PC-3 (cell line): ENCODE measurements at regions of chr3 and their contacts with region 1.

Region 1: GRCh38 chr3:41267975-41268663 is 68.8 kb downstream of the CTNNB1 start:
- DNase-seq: peak; percentile 99
- ATAC-seq: peak; percentile 98
- H3K4me3 ChIP-seq: no peak overlapping the region
- H3K27ac ChIP-seq: peak overlapping the region; percentile 68
- H3K4me1 ChIP-seq: peaks cover 36% of the 10 kb centered on the region
- H3K27me3 ChIP-seq: no peaks in the 10 kb centered on the region
- CTCF ChIP-seq: no peak

Region 2: GRCh38 chr3:41117398-41117870 is 150.7 kb before region 1 on chr3:
- CTCF ChIA-PET with region 1: no interaction called
- POLR2A ChIA-PET with region 1: no interaction called
- intact Hi-C with region 1: no loop called
- DNase-seq: peak; percentile 96
- ATAC-seq: peak; percentile 76
- H3K4me3 ChIP-seq: no peak overlapping the region
- H3K27ac ChIP-seq: peak overlapping the region; percentile 61
- H3K4me1 ChIP-seq: peaks cover 12% of the 10 kb centered on the region
- H3K27me3 ChIP-seq: no peaks in the 10 kb centered on the region; the same call in 1 of the 2 replicates
- CTCF ChIP-seq: no peak

Region 3: DNA sequence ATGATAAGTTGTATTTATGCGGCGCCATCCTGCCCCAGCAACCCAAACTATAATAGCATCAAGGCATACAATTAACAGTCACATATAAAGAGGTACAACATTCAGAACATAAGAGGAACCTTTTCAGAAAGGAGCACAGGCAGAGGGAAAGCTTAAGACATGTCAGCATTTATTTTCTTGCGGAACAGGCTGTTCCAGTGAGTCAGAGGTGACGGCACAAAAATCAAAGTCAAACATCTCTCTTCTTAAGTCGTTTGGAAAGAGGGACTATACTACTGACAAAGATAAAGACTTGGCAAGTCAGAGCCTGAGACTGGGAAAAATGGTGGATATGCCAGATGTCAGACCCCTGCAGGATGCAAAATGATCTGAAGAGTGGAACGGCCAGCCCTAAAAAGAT is 59.6 kb after region 1 on chr3:
- CTCF ChIA-PET with region 1: no interaction called
- POLR2A ChIA-PET with region 1: no interaction called
- intact Hi-C with region 1: loop called (anchors 5 kb)
- DNase-seq: peak; percentile 90
- ATAC-seq: peak; percentile 76
- H3K4me3 ChIP-seq: no peak overlapping the region
- H3K27ac ChIP-seq: no peak overlapping the region
- H3K4me1 ChIP-seq: peaks cover 32% of the 10 kb centered on the region
- H3K27me3 ChIP-seq: no peaks in the 10 kb centered on the region
- CTCF ChIP-seq: no peak

Region 4: GRCh38 chr3:41574900-41575299 is 306.8 kb after region 1 on chr3:
- CTCF ChIA-PET with region 1: no interaction called
- POLR2A ChIA-PET with region 1: no interaction called
- intact Hi-C with region 1: no loop called
- DNase-seq: peak; percentile 23
- ATAC-seq: no peak
- H3K4me3 ChIP-seq: no peak overlapping the region
- H3K27ac ChIP-seq: no peak overlapping the region
- H3K4me1 ChIP-seq: no peaks in the 10 kb centered on the region
- H3K27me3 ChIP-seq: no peaks in the 10 kb centered on the region
- CTCF ChIP-seq: peak; percentile 55